ENCODE measurements at regions of chr11 and their contacts with region 1.

Region 1: DNA sequence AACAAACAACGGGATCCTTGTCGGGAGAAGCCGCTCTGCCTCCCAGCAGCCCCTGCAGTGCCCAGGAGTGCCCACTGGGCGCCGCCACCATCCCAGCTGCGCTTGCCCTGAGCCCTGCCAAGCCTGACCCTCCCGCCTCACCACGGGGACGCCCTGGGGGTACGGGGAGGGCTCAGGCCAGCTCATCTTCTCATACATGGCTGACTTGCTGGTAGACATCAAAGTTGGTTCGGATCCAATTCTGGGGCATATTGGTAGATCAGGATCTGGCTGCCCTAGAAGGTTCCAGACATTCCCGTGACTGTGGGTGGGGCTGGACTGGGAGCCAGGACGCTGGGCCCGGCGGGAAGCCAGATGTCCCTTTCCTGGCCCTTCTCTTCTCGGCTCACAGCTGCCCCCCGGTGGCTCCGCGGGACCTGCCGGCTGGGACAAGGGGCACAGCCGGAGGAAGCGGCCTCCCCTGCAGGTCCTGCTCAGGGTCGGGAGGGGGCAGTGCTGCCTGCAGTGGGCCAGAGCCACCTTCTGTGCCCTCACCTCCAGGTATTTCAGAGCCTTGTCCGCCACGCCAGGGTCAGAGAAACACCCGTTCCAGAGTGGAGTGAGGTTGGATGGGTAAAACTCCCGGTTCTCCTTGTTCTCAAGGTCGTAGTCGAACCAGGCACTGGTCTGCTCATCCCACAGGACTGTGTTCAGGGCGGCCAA is 10.6 kb upstream of the TREH start:
- DNase-seq: peak; percentile 77 to 94 (median 90)
- H3K4me3 ChIP-seq: peak overlapping the region; percentile 26
- H3K27ac ChIP-seq: peak overlapping the region in 1 of 2 donors; percentile 31
- H3K4me1 ChIP-seq: peaks cover 3% of the 10 kb centered on the region
- H3K27me3 ChIP-seq: no peaks in the 10 kb centered on the region
- CTCF ChIP-seq: peak; percentile 77 to 88 (median 84)
- EP300 ChIP-seq: no peak
- POLR2A ChIP-seq: no peak

Region 2: GRCh38 chr11:118771547-118772288 is 81.7 kb after region 1 on chr11:
- intact Hi-C with region 1: loop called in 1 of 4 experiments (anchors 10 kb)
- DNase-seq: no peak
- H3K4me3 ChIP-seq: no peak overlapping the region
- H3K27ac ChIP-seq: no peak overlapping the region
- H3K4me1 ChIP-seq: peaks cover 19% of the 10 kb centered on the region
- H3K27me3 ChIP-seq: no peaks in the 10 kb centered on the region
- CTCF ChIP-seq: no peak
- EP300 ChIP-seq: no peak
- POLR2A ChIP-seq: no peak

Region 3: GRCh38 chr11:118791111-118791965 is 101.3 kb after region 1 on chr11 and contains the start of gene DDX6:
- intact Hi-C with region 1: loop called in 1 of 4 experiments (anchors 10 kb)
- DNase-seq: peak; percentile 89 to 94 (median 92)
- H3K4me3 ChIP-seq: peak within 1 kb of the TSS; percentile 71
- H3K27ac ChIP-seq: peak within 1 kb of the TSS; percentile 99
- H3K4me1 ChIP-seq: peaks cover 17% of the 10 kb centered on the region
- H3K27me3 ChIP-seq: no peaks in the 10 kb centered on the region
- CTCF ChIP-seq: peak; percentile 32 to 65 (median 63)
- EP300 ChIP-seq: no peak
- POLR2A ChIP-seq: peak; percentile 86
- total RNA-seq, gene DDX6: 81.6 to 212 (median 158) TPM

Region 4: DNA sequence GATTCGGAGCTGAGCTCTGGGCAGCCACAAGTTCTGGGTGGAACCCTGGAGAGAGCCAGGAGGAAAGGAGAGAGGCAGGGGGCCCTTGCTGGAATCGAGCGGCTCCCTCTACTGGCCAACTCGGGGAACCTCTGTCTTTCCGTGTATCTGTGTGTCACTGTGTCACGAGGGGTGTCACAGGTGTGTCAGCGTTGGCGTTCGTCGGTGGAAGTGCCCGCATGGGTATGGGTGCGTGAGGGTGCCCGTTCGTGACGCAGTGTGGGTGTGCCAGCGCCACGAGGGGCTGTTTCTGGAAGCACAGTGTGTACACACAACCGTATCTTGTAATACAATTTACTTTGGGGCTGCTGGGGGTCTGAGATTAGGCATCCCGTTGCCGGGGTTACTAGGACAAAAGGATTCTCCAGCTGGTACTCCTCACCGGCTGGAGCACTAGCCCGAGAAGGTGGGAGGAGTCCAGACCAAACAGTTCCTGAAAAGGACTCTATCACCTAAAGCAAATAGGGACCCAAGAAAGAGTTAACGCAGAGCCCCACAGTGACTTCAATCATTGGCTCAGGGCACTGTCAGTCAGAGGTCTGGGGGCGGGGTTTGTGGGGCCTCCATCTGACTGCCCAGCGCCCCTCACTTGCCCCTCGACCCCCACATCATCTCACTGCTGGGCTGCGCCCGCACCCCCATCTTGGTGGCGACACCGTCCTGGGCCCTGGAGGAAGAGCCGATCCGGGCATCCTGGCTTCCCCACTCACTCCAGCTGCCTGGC is 238.3 kb after region 1 on chr11:
- intact Hi-C with region 1: loop called in 1 of 4 experiments (anchors 5 kb)
- DNase-seq: peak; percentile 92 to 95 (median 95)
- H3K4me3 ChIP-seq: peak overlapping the region; percentile 98
- H3K27ac ChIP-seq: peak overlapping the region; percentile 76 to 90
- H3K4me1 ChIP-seq: peaks cover 3% of the 10 kb centered on the region
- H3K27me3 ChIP-seq: no peaks in the 10 kb centered on the region
- CTCF ChIP-seq: peak; percentile 88 to 98 (median 98)
- EP300 ChIP-seq: no peak
- POLR2A ChIP-seq: peak; percentile 35

Region 5: DNA sequence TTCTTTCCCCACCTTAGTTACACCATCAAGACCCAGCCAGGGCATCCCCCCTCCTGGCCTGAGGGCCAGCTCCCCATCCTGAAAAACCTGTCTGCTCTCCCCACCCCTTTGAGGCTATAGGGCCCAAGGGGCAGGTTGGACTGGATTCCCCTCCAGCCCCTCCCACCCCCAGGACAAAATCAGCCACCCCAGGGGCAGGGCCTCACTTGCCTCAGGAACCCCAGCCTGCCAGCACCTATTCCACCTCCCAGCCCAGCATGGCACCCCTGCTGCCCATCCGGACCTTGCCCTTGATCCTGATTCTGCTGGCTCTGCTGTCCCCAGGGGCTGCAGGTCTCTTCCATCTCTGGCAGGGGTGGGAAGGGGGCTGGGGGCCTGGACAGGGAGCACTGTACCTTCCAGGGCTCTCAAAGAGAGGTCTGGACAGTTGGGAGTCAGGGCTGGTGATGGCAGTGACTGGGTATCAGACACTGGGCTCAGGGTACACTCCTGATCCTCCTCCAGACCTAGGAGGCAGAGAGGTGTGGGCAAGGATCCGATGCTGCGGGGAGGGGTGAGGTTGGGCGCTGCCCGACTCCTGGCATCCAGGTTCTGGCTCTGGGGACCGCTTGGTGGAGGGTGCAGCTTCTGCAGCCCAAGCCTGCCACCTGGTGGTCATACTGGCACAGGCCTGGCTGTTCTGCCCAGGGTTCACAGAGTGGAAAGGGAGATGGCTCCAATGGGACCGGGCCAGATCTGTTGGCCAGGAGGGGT is 266.3 kb after region 1 on chr11 and contains the start of gene UPK2:
- intact Hi-C with region 1: loop called in 3 of 4 experiments (anchors 2 to 5 kb)
- DNase-seq: peak; percentile 84 to 91 (median 89)
- H3K4me3 ChIP-seq: no peak within 1 kb of the TSS
- H3K27ac ChIP-seq: no peak within 1 kb of the TSS
- H3K4me1 ChIP-seq: no peaks in the 10 kb centered on the region
- H3K27me3 ChIP-seq: no peaks in the 10 kb centered on the region
- CTCF ChIP-seq: peak; percentile 95 to 97 (median 95)
- EP300 ChIP-seq: no peak
- POLR2A ChIP-seq: no peak
- total RNA-seq, gene UPK2: not detected